HepG2 (cell line): ENCODE measurements at regions of chr13 and their contacts with region 1.

Region 1: DNA sequence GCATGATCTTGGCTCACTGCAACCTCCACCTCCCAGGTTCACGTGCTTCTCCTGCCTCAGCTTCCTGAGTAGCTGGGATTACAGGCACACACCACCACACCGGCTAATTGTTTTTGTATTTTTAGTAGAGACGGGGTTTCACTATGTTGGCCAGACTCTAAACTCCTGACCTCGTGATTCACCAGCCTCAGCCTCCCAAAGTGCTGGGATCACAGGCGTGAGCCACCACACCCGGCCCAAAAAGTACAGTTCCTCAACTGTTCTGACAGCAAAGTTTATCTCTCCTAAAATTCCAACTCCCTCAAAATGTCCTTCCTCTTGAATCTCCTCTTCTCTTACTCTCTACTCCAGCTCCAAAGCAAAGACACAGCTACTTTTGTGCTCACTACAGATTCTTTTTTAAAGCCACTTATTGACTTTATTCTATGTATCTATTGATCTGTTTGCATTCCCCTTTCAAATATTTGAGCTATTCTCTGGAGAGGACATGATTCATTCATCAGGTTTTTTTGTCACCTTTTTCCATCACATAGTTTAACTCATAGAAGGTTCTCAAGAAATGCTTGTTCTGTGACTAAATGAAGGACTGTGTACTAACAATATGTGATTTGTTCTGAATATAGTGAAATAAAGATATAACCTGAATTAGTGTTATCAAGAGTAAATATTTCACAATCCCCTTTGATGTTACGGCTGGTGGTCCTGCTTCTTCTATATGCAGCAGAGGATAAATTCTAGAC is 142.2 kb downstream of the TBC1D4 start:
- DNase-seq: peak; percentile 96
- ATAC-seq: peak; percentile 94
- H3K4me3 ChIP-seq: no peak overlapping the region
- H3K27ac ChIP-seq: peak overlapping the region; percentile 71
- H3K4me1 ChIP-seq: peaks cover 40% of the 10 kb centered on the region
- H3K27me3 ChIP-seq: no peaks in the 10 kb centered on the region
- CTCF ChIP-seq: no peak
- EP300 ChIP-seq: peak; percentile 62 to 95; a peak in 3 of 4 replicates
- POLR2A ChIP-seq: no peak
- RAD21 ChIP-seq: peak; percentile 26; the same call in 1 of the 2 replicates

Region 2: GRCh38 chr13:75329747-75330122 is 10.1 kb before region 1 on chr13:
- CTCF ChIA-PET with region 1: no interaction called
- POLR2A ChIA-PET with region 1: interaction called, 12 read pairs
- in situ Hi-C with region 1: no loop called
- intact Hi-C with region 1: no loop called
- DNase-seq: peak; percentile 70
- ATAC-seq: peak; percentile 92
- H3K4me3 ChIP-seq: no peak overlapping the region
- H3K27ac ChIP-seq: peak overlapping the region; percentile 63
- H3K4me1 ChIP-seq: peaks cover 52% of the 10 kb centered on the region
- H3K27me3 ChIP-seq: no peaks in the 10 kb centered on the region
- CTCF ChIP-seq: no peak
- EP300 ChIP-seq: peak in 1 of 2 experiments; percentile 41; a peak in 1 of 4 replicates
- POLR2A ChIP-seq: no peak
- RAD21 ChIP-seq: no peak